T-cell (primary cell): ENCODE measurements at regions of chr7 and their contacts with region 1.

Region 1: GRCh38 chr7:44257618-44258422 is 57.0 kb downstream of the YKT6 start:
- DNase-seq: peak; percentile 38 to 73 (median 54)
- ATAC-seq: peak; percentile 91 to 95 (median 94)
- H3K4me3 ChIP-seq: peak overlapping the region in 1 of 2 donors; percentile 16
- H3K4me3 Mint-ChIP-seq: peak overlapping the region; percentile 29 to 63 (median 58)
- H3K27ac ChIP-seq: peak overlapping the region; percentile 87
- H3K27ac Mint-ChIP-seq: peak overlapping the region; percentile 90 to 94
- H3K4me1 ChIP-seq: peaks cover 19 to 31% of the 10 kb centered on the region in 2 experiments
- H3K4me1 Mint-ChIP-seq: peaks cover 25 to 29% (median 27%) of the 10 kb centered on the region in 3 donors
- H3K27me3 ChIP-seq: no peaks in the 10 kb centered on the region
- H3K27me3 Mint-ChIP-seq: peaks cover 0 to 5% of the 10 kb centered on the region in 2 donors

Region 2: DNA sequence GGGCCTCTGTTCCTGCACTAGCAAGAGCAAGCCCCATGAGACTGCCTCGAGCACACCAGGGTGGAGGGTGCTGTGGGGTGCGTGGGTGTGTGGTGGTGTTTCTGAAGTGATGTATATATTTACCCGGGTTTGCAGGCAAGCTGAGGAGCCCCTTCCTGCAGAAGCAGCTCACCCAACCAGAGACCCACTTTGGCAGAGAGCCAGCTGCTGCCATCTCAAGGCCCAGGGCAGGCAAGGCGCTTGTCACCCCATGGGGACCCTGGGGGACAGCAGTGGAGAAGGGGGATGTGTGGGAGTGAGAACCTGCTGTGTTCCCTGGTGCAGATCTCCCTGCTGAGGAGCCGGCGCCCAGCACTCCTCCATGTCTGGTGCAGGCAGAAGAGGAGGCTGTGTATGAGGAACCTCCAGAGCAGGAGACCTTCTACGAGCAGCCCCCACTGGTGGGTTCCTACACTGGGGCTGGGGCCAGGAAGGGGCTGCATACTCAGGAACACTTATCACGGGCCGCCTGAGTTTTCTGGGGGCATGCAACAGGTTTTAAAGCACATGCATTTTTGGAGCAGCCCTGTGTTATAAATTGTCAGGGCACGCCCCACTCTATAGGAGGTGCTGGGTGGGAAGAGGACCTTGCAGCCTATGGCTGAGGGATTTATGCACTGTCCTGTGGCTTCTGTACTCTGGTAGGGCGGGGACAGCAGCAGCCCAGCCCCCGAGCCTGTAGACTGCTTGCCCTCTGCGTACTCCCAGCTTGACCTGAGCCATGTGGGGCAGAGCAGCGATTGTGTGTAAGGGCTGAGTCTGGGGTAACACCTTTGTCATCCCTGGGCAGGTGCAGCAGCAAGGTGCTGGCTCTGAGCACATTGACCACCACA is 198.4 kb before region 1 on chr7:
- CTCF ChIA-PET with region 1: no interaction called
- POLR2A ChIA-PET with region 1: no interaction called
- DNase-seq: peak in 5 of 35 experiments; percentile 1 to 49 (median 22)
- ATAC-seq: peak in 3 of 4 experiments; percentile 31 to 73 (median 42)
- H3K4me3 ChIP-seq: no peak overlapping the region
- H3K4me3 Mint-ChIP-seq: peak overlapping the region in 1 of 3 donors; percentile 17
- H3K27ac ChIP-seq: no peak overlapping the region
- H3K27ac Mint-ChIP-seq: peak overlapping the region; percentile 5 to 34
- H3K4me1 ChIP-seq: peaks cover 0 to 37% of the 10 kb centered on the region in 2 experiments
- H3K4me1 Mint-ChIP-seq: peaks cover 27 to 31% (median 28%) of the 10 kb centered on the region in 3 donors
- H3K27me3 ChIP-seq: no peaks in the 10 kb centered on the region
- H3K27me3 Mint-ChIP-seq: no peaks in the 10 kb centered on the region

Region 3: DNA sequence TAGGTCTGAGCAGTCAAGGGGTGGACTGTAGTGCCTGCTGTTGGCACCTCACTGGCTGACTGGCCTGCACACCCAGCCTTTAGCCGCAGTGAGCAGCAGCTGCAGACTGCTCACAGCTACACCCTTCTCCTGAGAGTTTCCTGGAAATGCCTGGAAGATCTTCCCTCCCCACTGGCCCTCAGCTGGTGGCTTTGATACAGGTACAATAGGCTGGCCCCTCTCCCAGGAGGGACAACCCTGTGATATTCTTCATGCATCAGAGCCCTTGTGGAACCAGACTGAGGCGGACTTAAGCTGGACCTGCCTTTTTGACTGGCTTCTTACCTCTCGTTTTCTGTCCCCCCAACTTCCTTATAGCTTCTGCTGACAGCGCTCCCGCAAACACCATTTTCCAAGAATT is 75.0 kb before region 1 on chr7:
- CTCF ChIA-PET with region 1: no interaction called
- POLR2A ChIA-PET with region 1: interaction called in 1 of 2 experiments, 11 read pairs
- DNase-seq: no peak
- ATAC-seq: no peak
- H3K4me3 ChIP-seq: no peak overlapping the region
- H3K4me3 Mint-ChIP-seq: no peak overlapping the region
- H3K27ac ChIP-seq: no peak overlapping the region
- H3K27ac Mint-ChIP-seq: no peak overlapping the region
- H3K4me1 ChIP-seq: no peaks in the 10 kb centered on the region
- H3K4me1 Mint-ChIP-seq: no peaks in the 10 kb centered on the region
- H3K27me3 ChIP-seq: peaks cover 0 to 16% of the 10 kb centered on the region in 2 experiments
- H3K27me3 Mint-ChIP-seq: peaks cover 5 to 11% of the 10 kb centered on the region in 2 donors

Region 4: GRCh38 chr7:44333911-44334733 is 76.3 kb after region 1 on chr7:
- CTCF ChIA-PET with region 1: no interaction called
- POLR2A ChIA-PET with region 1: no interaction called
- DNase-seq: no peak
- ATAC-seq: no peak
- H3K4me3 ChIP-seq: no peak overlapping the region
- H3K4me3 Mint-ChIP-seq: no peak overlapping the region
- H3K27ac ChIP-seq: no peak overlapping the region
- H3K27ac Mint-ChIP-seq: no peak overlapping the region
- H3K4me1 ChIP-seq: no peaks in the 10 kb centered on the region
- H3K4me1 Mint-ChIP-seq: no peaks in the 10 kb centered on the region
- H3K27me3 ChIP-seq: peaks cover 0 to 27% of the 10 kb centered on the region in 2 experiments
- H3K27me3 Mint-ChIP-seq: peaks cover 4 to 8% of the 10 kb centered on the region in 2 donors

Region 5: GRCh38 chr7:44654255-44654796 is 396.5 kb after region 1 on chr7:
- CTCF ChIA-PET with region 1: no interaction called
- POLR2A ChIA-PET with region 1: no interaction called
- DNase-seq: no peak
- ATAC-seq: no peak
- H3K4me3 ChIP-seq: no peak overlapping the region
- H3K4me3 Mint-ChIP-seq: no peak overlapping the region
- H3K27ac ChIP-seq: no peak overlapping the region
- H3K27ac Mint-ChIP-seq: peak overlapping the region in 1 of 2 donors; percentile 21
- H3K4me1 ChIP-seq: no peaks in the 10 kb centered on the region
- H3K4me1 Mint-ChIP-seq: peaks cover 0 to 4% (median 0%) of the 10 kb centered on the region in 3 donors
- H3K27me3 ChIP-seq: no peaks in the 10 kb centered on the region
- H3K27me3 Mint-ChIP-seq: no peaks in the 10 kb centered on the region